ENCODE measurements at regions of chr11 and their contacts with region 1.

Region 1: DNA sequence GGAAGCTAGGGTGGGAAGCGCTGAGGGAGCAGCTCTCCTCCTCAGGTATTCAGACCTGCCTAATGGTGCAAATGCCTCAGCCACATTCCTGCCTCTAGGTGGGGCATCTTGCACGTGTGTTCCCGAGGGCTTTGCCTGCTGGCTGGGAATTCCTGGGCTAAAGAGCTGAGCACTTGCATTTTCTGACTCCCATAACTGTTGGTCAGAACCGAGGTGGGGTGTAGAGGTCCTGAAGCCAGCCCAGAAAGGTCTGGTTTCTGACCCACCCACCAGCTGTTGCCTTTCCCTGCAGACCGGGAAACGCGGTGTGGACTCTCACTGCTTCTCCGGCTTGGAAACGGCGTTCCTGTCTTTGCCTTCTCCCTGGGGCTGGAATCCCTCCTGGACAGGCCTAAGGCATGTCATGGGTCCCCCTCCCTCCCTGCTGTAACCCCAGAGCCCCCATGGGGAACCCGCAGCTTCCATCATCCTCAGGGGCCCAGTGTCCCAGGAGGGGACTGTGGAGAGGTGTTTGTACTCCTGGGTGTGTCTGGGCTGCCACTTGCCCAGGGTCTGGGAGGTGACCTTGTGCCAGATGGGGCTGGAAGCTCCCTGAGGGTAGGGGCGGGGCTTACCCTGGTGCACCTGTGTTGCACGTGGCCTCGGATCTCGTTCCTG is 24.0 kb upstream of the SMIM38 start:
- DNase-seq: no peak
- ATAC-seq: no peak
- H3K4me3 ChIP-seq: no peak overlapping the region
- H3K27ac ChIP-seq: no peak overlapping the region
- H3K4me1 ChIP-seq: peaks cover 14% of the 10 kb centered on the region
- H3K27me3 ChIP-seq: no peaks in the 10 kb centered on the region
- CTCF ChIP-seq: peak; percentile 33 to 66 (median 33); a peak in 4 of 6 replicates
- EP300 ChIP-seq: no peak
- POLR2A ChIP-seq: no peak
- RAD21 ChIP-seq: peak; percentile 63

Region 2: DNA sequence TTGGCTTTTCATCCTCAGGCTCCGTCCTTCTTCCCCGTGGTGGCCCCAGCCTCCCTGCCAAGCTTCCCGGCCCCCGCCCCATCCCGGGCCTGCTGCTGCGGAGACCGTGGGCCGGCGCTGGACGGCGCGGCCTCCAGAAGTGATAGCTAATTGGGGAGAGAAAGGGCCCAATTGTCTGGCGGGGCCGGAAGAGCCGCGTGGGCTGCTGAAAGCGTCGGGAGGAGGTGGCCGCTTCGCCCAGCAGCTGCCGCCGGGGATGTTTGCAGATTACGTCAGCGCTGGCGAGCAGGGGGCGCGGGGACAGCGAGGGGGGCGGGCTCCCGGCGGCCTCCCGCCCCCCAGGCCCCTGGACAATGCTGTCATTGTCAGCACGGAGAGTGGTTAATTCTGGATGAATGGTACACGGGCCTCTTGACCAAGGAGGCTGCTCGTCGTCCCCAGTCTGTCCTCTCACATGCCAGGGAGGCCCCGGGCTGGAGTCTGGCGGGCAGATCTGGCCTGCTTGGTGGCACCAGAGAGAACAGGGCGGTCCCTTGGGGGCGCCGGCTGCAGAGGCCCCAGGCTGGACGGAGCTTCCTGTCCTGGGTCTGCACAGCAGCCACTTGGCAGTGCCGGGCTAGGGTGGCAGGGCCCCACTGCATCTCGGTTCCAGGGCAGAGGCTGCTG is 25.5 kb after region 1 on chr11:
- CTCF ChIA-PET with region 1: interaction called, 4 read pairs
- POLR2A ChIA-PET with region 1: no interaction called
- RAD21 ChIA-PET with region 1: interaction called, 12 read pairs
- SMC1A ChIA-PET with region 1: interaction called, 3 read pairs
- in situ Hi-C with region 1: no loop called
- intact Hi-C with region 1: no loop called
- DNase-seq: no peak
- ATAC-seq: peak; percentile 66
- H3K4me3 ChIP-seq: peak overlapping the region; percentile 57; the same call in 1 of the 2 replicates
- H3K27ac ChIP-seq: peak overlapping the region; percentile 76
- H3K4me1 ChIP-seq: peaks cover 32% of the 10 kb centered on the region
- H3K27me3 ChIP-seq: no peaks in the 10 kb centered on the region
- CTCF ChIP-seq: no peak
- EP300 ChIP-seq: no peak
- POLR2A ChIP-seq: no peak
- RAD21 ChIP-seq: no peak

Region 3: GRCh38 chr11:69200331-69201065 is 68.7 kb after region 1 on chr11:
- CTCF ChIA-PET with region 1: no interaction called
- POLR2A ChIA-PET with region 1: no interaction called
- RAD21 ChIA-PET with region 1: no interaction called
- SMC1A ChIA-PET with region 1: no interaction called
- in situ Hi-C with region 1: no loop called
- intact Hi-C with region 1: no loop called
- DNase-seq: no peak
- ATAC-seq: no peak
- H3K4me3 ChIP-seq: no peak overlapping the region
- H3K27ac ChIP-seq: no peak overlapping the region
- H3K4me1 ChIP-seq: no peaks in the 10 kb centered on the region; the same call in 1 of the 2 replicates
- H3K27me3 ChIP-seq: no peaks in the 10 kb centered on the region
- CTCF ChIP-seq: no peak
- EP300 ChIP-seq: no peak
- POLR2A ChIP-seq: no peak
- RAD21 ChIP-seq: no peak

Measured in GM12878 (cell line).